CD4-positive, alpha-beta memory T cell (primary cell): ENCODE measurements at regions of chrX and their contacts with region 1.

Region 1: DNA sequence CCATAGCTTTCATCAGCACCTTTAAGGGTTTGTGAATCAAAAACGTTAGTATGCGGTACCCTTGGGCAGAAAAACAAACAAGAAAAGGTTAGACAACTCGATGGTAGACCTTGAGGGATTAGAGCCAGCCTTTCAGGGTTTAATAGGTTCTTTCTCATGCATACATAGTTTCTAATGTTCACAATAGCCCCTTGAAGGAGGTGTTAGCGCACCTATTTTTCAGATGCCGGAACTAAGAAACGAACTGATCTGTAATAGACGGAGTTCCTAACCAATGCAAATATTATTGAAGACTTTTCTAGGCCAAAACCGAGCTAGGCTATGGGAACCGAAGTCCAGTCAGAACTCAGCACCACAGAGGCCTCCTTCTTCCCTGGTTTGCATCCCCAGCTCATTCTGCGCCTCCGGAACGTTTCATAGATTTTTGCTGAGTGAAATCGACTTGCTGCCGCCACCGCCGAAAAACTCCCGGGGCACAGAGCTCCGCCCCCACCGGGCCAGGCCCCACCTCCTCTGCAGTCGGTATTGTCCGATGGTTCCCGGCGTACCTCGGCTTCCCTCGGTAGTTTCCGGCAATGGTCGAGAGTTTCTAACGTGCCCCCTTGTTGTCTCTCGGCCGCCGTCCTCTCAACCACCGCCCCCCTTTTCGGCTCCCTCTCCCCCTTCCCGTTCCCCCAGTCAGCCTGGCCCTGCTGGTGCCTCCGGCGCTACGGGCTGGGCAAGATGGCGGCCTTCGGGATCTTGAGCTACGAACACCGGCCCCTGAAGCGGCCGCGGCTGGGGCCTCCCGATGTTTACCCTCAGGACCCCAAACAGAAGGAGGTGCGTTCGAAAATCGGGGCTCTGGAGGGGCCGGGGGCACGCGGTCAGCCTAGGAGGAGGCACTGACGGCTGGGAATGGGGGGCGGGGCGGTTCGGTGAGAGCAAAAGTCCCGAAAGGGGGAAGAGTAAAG is at the start of gene MED12:
- DNase-seq: peak; percentile 75 to 83 (median 78)
- H3K4me3 ChIP-seq: peak within 1 kb of the TSS; percentile 36 to 69
- H3K4me3 Mint-ChIP-seq: peak within 1 kb of the TSS; percentile 84 to 90 (median 89)
- H3K27ac ChIP-seq: peak within 1 kb of the TSS; percentile 88
- H3K27ac Mint-ChIP-seq: peak within 1 kb of the TSS; percentile 90 to 95 (median 95)
- H3K4me1 ChIP-seq: peaks cover 26% of the 10 kb centered on the region
- H3K4me1 Mint-ChIP-seq: peaks cover 15 to 47% (median 29%) of the 10 kb centered on the region in 4 donors
- H3K27me3 ChIP-seq: no peaks in the 10 kb centered on the region
- H3K27me3 Mint-ChIP-seq: no peaks in the 10 kb centered on the region
- total RNA-seq, gene MED12: 84.4 to 89.9 TPM

Region 2: GRCh38 chrX:71103110-71103983 is 15.0 kb before region 1 on chrX:
- CTCF ChIA-PET with region 1: interaction called, 32 read pairs
- POLR2A ChIA-PET with region 1: interaction called, 141 read pairs
- intact Hi-C with region 1: loop called (anchors 1 kb)
- DNase-seq: peak; percentile 58 to 71 (median 62)
- H3K4me3 ChIP-seq: peak overlapping the region; percentile 11 to 37
- H3K4me3 Mint-ChIP-seq: peak overlapping the region; percentile 79 to 90 (median 84)
- H3K27ac ChIP-seq: peak overlapping the region; percentile 66
- H3K27ac Mint-ChIP-seq: peak overlapping the region; percentile 91 to 97 (median 95)
- H3K4me1 ChIP-seq: peaks cover 90% of the 10 kb centered on the region
- H3K4me1 Mint-ChIP-seq: peaks cover 57 to 92% (median 82%) of the 10 kb centered on the region in 4 donors
- H3K27me3 ChIP-seq: no peaks in the 10 kb centered on the region
- H3K27me3 Mint-ChIP-seq: no peaks in the 10 kb centered on the region

Region 3: DNA sequence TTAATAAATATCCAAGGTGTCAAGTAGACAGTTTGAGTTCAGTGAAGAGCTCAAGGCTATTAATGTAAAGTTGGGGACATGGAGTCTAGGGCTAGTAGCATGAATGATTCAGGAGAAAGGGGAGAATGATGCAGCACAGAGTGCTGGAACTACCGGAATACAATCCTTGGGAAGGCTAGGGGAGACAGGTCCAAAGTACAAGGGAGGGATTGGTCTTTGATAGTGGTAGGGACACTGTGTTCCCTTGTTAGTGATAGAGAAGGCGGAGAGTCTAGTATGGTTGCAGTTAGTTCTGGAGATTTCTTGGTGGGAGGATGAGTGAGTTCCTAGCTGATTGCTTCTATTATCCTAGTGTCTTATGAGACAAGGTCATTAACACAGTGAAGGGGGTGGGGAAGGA is 468.6 kb after region 1 on chrX:
- CTCF ChIA-PET with region 1: no interaction called
- POLR2A ChIA-PET with region 1: no interaction called
- intact Hi-C with region 1: no loop called
- DNase-seq: no peak
- H3K4me3 ChIP-seq: no peak overlapping the region
- H3K4me3 Mint-ChIP-seq: no peak overlapping the region
- H3K27ac ChIP-seq: no peak overlapping the region
- H3K27ac Mint-ChIP-seq: peak overlapping the region in 3 of 7 donors; percentile 0 to 62 (median 33)
- H3K4me1 ChIP-seq: no peaks in the 10 kb centered on the region
- H3K4me1 Mint-ChIP-seq: peaks cover 0 to 3% (median 2%) of the 10 kb centered on the region in 4 donors
- H3K27me3 ChIP-seq: no peaks in the 10 kb centered on the region
- H3K27me3 Mint-ChIP-seq: no peaks in the 10 kb centered on the region